HEK293 (cell line): ENCODE measurements at regions of chrX and their contacts with region 1.

Region 1: DNA sequence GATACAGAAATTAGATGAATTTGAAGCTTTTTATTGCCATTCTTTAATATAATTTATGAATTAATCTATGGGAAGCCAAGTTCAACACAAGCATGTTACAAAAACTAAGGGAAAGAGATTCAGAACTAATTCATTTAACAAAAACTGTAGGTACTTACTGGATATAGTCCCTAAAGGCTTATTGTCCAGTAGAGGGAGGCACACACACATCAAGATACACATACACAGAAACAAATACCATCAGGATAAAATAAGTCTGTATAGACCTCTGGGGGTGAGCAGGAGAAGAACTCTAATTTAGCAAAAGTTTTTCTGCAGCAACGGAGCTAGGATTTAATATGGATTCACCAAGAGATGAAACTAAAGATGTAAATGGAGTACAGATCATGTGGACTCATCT is 83.0 kb upstream of the IL13RA1 start:
- H3K4me3 ChIP-seq: no peak overlapping the region
- H3K27ac ChIP-seq: no peak overlapping the region
- H3K4me1 ChIP-seq: no peaks in the 10 kb centered on the region
- CTCF ChIP-seq: peak; percentile 52

Region 2: DNA sequence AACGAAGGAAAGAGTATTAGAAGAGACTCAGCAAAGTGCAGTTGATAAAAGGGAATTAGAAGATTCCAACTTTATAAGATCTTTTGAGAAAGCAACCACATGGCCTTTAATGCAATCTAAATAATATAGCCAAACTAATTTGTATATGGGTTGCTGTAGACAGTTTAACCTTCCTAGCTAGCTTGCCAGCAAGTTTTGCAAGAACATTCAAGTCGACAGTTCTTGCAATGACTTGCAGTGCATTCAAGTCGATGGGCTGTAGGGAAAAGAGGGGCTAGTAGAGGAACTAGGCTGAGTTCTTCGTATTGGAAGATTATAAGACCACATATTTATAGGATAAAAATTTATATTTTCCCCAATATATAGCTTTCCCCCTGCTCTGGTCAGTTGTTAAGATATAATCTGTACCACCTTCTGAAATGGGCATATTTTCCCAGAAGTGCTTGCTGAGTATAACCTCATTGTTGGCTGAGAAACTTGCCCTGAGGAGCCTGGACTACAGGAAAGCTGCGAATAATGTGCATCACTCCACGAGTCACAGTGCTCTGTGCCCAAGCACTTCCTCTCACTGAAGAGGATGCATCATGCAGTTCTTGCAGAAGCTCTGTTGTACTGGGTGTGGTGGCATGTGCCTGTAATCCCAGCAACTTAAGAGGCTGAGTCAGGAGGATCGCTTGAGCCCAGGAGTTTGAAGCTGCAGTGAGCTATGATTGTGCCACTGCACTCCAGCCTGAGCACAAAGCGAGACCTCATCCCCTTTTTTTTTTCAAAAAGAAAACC is 92.1 kb before region 1 on chrX:
- CTCF ChIA-PET with region 1: no interaction called
- POLR2A ChIA-PET with region 1: no interaction called
- H3K4me3 ChIP-seq: no peak overlapping the region
- H3K27ac ChIP-seq: no peak overlapping the region
- H3K4me1 ChIP-seq: peaks cover 5% of the 10 kb centered on the region; the same call in 1 of the 2 replicates
- CTCF ChIP-seq: no peak

Region 3: DNA sequence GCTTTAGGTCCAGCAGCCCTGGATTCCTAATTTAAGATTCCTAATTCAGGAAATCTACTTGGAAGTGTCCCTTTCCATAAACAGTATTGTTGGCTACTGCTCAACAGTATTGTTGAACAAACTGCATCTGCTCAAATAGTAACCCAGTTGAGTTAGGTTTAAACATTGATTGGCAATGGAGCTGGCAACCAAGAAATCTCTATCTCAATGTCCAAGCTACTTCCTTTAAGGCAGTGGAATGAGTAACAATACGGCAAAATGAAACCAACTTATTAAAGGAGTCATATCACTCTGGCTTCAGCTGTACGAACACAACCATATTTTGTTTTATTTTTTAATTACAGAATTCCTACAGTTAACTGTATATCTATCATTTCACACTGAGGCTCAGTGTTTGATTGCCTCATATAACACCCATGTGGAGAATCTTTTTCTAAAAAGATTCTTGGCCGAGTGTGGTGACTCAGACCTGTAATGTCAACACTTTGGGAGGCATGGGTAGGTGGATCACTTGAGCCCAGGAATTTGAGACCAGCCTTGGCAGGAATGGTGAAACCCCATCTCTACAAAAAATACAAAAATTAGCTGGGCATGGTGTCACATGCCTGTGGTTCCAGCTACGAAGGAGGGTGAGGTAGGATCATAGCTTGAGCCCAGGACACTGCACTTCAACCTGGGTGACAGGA is 11.3 kb after region 1 on chrX:
- CTCF ChIA-PET with region 1: interaction called, 19 read pairs
- POLR2A ChIA-PET with region 1: no interaction called
- H3K4me3 ChIP-seq: no peak overlapping the region
- H3K27ac ChIP-seq: no peak overlapping the region
- H3K4me1 ChIP-seq: 0 out of 2 replicates have a peak, but pooled peaks cover 3% of the 10 kb centered on the region
- CTCF ChIP-seq: no peak

Region 4: DNA sequence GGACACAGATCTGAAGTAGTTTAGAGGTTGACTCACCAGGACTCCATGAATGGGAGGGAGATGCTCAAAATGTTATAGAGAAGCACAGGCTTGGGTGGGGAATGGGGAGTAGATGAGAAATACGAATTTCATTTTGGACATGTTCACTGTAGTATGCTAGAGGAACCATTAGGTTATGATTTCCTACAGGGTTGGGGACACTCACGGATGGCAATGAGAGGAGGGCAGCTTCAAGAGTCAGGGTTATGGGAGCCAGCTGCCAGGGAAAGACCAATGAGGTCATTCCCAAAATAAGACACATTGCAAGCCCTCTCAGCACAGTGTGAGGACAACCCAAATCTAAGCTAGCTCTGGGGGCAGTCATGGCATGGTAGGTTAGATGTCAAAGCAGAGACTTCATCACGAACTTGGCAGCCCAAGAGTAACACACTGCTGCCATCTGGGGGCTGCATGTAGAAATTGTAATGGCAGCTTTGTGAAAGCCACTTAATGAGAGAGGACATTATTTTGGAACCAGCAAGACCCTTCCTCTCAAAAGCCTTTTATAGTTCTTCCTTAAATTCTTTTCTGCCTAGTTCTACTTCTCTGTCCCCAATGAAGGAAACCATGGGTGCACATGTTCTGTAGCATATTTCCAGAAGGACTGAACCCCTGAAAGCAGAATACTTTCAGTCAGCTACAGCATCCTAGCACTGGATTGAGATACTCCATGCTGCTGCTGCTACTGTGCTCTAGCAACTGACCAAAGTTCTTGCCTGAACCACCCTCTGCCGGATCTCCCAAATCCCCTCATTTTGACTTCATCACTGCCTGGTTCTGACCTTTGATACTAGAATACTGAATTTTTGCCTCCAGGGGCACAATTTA is 163.0 kb after region 1 on chrX:
- CTCF ChIA-PET with region 1: interaction called, 22 read pairs
- POLR2A ChIA-PET with region 1: interaction called, 5 read pairs
- H3K4me3 ChIP-seq: no peak overlapping the region
- H3K27ac ChIP-seq: no peak overlapping the region
- H3K4me1 ChIP-seq: no peaks in the 10 kb centered on the region
- CTCF ChIP-seq: peak; percentile 79